Activated B cell treated with CpG ODN at 0.5 μM for 24 hours (primary cell): ENCODE measurements at regions of chr19 and their contacts with region 1.

Region 1: DNA sequence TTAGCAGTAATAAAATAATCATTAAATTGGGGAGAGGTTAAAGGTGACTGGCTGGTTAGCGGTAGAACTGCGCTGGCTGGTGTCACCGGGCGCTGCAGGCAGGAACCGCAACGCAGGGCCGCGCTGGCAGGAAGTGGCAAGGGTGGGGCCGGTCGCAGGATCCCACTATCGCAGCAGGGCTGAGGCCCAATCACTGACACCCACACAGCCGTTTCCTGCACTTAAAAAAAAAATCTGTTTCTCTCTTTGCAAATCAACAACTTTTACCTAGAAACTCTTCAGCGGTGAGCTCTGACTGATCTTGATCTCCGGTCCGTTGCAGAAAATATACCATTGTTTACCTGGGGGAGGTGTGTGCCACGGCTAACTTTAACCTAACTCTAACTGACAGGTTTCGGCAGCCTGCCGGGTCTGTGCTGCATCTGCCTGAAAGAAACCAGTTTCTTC is 46.9 kb downstream of the KLF2 start:
- DNase-seq: peak; percentile 77
- ATAC-seq: peak; percentile 78
- H3K4me3 Mint-ChIP-seq: peak overlapping the region; percentile 78
- H3K27ac Mint-ChIP-seq: no peak overlapping the region
- H3K4me1 Mint-ChIP-seq: peaks cover 33% of the 10 kb centered on the region
- H3K27me3 Mint-ChIP-seq: no peaks in the 10 kb centered on the region
- CTCF ChIP-seq: no peak

Region 2: GRCh38 chr19:16197622-16198369 is 173.8 kb before region 1 on chr19 and contains the start of gene AP1M1:
- CTCF ChIA-PET with region 1: no interaction called
- POLR2A ChIA-PET with region 1: interaction called, 17 read pairs
- intact Hi-C with region 1: no loop called
- DNase-seq: peak; percentile 99
- ATAC-seq: peak; percentile 88
- H3K4me3 Mint-ChIP-seq: peak within 1 kb of the TSS; percentile 83
- H3K27ac Mint-ChIP-seq: peak within 1 kb of the TSS; percentile 97
- H3K4me1 Mint-ChIP-seq: peaks cover 39% of the 10 kb centered on the region
- H3K27me3 Mint-ChIP-seq: no peaks in the 10 kb centered on the region
- CTCF ChIP-seq: no peak
- total RNA-seq, gene AP1M1: 82.6 and 87.5 TPM in 2 replicates

Region 3: GRCh38 chr19:16259385-16260159 is 112.0 kb before region 1 on chr19:
- CTCF ChIA-PET with region 1: no interaction called
- POLR2A ChIA-PET with region 1: interaction called, 171 read pairs
- intact Hi-C with region 1: loop called (anchors 1 kb)
- DNase-seq: peak; percentile 78
- ATAC-seq: peak; percentile 75
- H3K4me3 Mint-ChIP-seq: peak overlapping the region; percentile 65
- H3K27ac Mint-ChIP-seq: peak overlapping the region; percentile 93
- H3K4me1 Mint-ChIP-seq: peaks cover 90% of the 10 kb centered on the region
- H3K27me3 Mint-ChIP-seq: no peaks in the 10 kb centered on the region
- CTCF ChIP-seq: no peak

Region 4: GRCh38 chr19:16330368-16330801 is 41.2 kb before region 1 on chr19:
- CTCF ChIA-PET with region 1: interaction called, 12 read pairs
- POLR2A ChIA-PET with region 1: interaction called, 828 read pairs
- intact Hi-C with region 1: loop called (anchors 1 kb)
- DNase-seq: peak; percentile 70
- ATAC-seq: peak; percentile 77
- H3K4me3 Mint-ChIP-seq: peak overlapping the region; percentile 42
- H3K27ac Mint-ChIP-seq: peak overlapping the region; percentile 94
- H3K4me1 Mint-ChIP-seq: peaks cover 63% of the 10 kb centered on the region
- H3K27me3 Mint-ChIP-seq: no peaks in the 10 kb centered on the region
- CTCF ChIP-seq: no peak

Region 5: DNA sequence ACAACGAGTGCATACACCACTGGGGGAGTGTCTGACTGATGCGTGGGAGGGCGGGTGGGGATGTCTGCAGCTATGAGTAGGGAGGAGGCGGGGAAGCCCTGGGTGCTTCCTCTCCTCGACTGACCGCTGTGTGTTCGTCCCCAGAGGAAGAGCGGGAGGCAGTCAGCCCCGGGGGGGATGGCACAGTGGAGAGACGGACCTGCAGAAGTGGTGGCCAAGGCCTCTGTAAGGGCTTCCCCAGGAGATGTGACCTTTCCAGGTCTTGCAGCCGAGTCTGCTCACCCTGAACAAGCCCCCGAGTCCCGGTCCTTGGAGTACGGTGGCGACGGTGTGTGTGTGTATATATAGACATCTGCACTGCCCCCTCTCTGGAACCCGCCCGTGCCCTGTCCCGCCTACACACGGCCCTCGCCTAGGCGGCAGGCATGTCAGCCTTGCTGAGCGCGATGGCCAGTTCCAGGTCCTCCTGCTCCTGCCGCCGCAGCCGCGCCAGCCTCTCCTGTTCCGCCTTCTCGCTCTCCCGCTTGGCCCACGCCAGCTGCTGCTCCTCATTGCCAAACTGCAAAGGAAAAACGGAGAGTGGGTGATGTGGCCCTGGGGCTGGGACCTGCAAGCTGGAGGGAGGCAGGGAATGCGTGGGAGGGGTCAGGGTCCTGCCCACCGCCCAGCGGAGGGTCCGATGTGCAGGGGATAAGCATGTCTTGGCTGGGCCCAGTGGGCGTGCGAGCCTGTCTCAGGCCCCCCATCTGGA is 16.1 kb before region 1 on chr19:
- CTCF ChIA-PET with region 1: interaction called, 4 read pairs
- POLR2A ChIA-PET with region 1: interaction called, 63 read pairs
- intact Hi-C with region 1: loop called (anchors 1 kb)
- DNase-seq: no peak
- ATAC-seq: peak; percentile 63
- H3K4me3 Mint-ChIP-seq: peak overlapping the region; percentile 66
- H3K27ac Mint-ChIP-seq: no peak overlapping the region
- H3K4me1 Mint-ChIP-seq: peaks cover 83% of the 10 kb centered on the region
- H3K27me3 Mint-ChIP-seq: no peaks in the 10 kb centered on the region
- CTCF ChIP-seq: no peak

Region 6: DNA sequence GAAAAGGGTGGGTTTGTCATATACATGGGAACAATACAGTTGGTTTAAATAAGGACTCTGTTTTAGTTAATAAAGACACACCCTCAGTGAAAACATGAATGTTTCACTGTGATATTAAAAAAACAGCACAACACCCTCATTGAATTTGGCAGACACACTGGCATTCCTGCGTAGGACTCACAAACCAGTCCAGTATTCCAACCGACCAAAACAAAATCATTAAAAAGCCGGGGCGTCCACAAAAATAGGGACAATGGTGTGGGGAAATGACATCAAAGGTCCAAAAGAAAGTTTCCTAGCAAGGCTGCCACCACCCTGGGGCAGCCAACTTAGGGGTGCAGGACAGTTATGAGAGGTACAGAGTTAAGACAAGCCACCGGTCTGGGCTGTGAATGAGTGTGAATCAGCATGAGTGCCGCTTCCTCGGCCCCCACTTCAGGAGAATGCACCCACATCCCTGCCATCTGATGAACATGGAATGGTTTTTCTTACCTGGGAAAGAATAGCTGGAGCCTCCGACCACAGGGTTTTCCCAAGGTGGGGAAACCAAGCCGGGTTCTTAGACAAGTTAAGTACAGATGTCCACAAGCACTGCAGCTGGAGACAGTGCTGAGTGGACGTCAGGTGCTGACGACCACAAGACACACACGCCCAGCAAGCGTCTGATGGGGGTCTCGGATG is 26.4 kb after region 1 on chr19:
- CTCF ChIA-PET with region 1: no interaction called
- POLR2A ChIA-PET with region 1: interaction called, 25 read pairs
- intact Hi-C with region 1: loop called (anchors 1 kb)
- DNase-seq: no peak
- ATAC-seq: no peak
- H3K4me3 Mint-ChIP-seq: peak overlapping the region; percentile 59
- H3K27ac Mint-ChIP-seq: peak overlapping the region; percentile 91
- H3K4me1 Mint-ChIP-seq: peaks cover 77% of the 10 kb centered on the region
- H3K27me3 Mint-ChIP-seq: no peaks in the 10 kb centered on the region
- CTCF ChIP-seq: no peak

Region 7: GRCh38 chr19:16446724-16447368 is 75.3 kb after region 1 on chr19:
- CTCF ChIA-PET with region 1: no interaction called
- POLR2A ChIA-PET with region 1: interaction called, 4 read pairs
- intact Hi-C with region 1: loop called (anchors 2 kb)
- DNase-seq: peak; percentile 52
- ATAC-seq: peak; percentile 43
- H3K4me3 Mint-ChIP-seq: peak overlapping the region; percentile 64
- H3K27ac Mint-ChIP-seq: peak overlapping the region; percentile 95
- H3K4me1 Mint-ChIP-seq: peaks cover 94% of the 10 kb centered on the region
- H3K27me3 Mint-ChIP-seq: no peaks in the 10 kb centered on the region
- CTCF ChIP-seq: no peak

Region 8: DNA sequence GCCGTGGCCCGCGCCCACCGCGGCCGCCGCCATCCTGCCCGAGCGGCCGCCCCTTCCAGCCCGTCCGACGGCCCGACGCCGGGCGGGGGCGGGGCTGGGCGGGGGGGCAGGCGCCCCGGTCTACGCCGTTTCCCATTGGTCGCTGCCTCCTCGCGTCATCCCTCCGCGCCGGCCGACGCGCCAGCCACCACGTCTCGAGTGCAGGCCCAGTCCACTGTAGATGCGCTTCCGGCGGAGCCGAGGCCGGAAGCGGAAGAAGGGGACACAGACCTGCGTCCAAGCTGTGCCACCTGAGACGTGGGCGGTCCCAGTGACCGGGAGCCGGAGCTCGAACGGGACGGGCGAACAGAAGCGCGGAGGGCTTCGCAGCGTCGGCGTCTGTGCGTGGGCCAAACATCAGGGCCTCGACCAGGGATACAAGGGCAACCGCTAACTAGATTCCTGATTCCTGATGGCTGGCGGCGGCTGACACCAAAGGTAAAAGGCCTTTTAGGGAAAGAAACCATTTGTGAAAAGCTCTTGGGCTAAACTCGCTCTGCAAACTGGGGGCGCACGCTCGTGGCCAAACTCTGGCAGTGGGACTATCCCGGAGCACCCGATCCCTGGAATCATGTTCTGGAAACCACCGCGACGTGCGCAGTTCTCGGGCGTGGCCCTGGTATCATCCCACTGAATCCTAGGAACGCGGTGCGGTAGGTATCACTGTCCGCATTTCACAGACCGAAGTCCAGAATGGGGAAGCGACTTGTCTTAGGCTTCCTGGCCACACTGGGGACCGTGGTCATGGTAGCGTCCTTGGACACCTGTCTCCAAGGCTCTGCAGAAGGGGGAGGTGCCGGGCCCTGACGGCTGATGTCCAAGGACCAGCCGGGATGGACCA is 201.0 kb after region 1 on chr19 and contains the start of gene SLC35E1:
- CTCF ChIA-PET with region 1: no interaction called
- POLR2A ChIA-PET with region 1: no interaction called
- intact Hi-C with region 1: no loop called
- DNase-seq: peak; percentile 88
- ATAC-seq: peak; percentile 93
- H3K4me3 Mint-ChIP-seq: peak within 1 kb of the TSS; percentile 94
- H3K27ac Mint-ChIP-seq: peak within 1 kb of the TSS; percentile 92
- H3K4me1 Mint-ChIP-seq: peaks cover 49% of the 10 kb centered on the region
- H3K27me3 Mint-ChIP-seq: no peaks in the 10 kb centered on the region
- CTCF ChIP-seq: no peak
- total RNA-seq, gene SLC35E1: 41.6 and 51.7 TPM in 2 replicates

Region 9: GRCh38 chr19:16671652-16672274 is 300.2 kb after region 1 on chr19:
- CTCF ChIA-PET with region 1: no interaction called
- POLR2A ChIA-PET with region 1: no interaction called
- intact Hi-C with region 1: no loop called
- DNase-seq: no peak
- ATAC-seq: no peak
- H3K4me3 Mint-ChIP-seq: no peak overlapping the region
- H3K27ac Mint-ChIP-seq: no peak overlapping the region
- H3K4me1 Mint-ChIP-seq: no peaks in the 10 kb centered on the region
- H3K27me3 Mint-ChIP-seq: no peaks in the 10 kb centered on the region
- CTCF ChIP-seq: no peak